Astrocyte of the cerebellum (primary cell): ENCODE measurements at regions of chr7 and their contacts with region 1.

Region 1: GRCh38 chr7:69610374-69611084 is 12.3 kb downstream of the AUTS2 start:
- DNase-seq: no peak
- H3K4me3 ChIP-seq: no peak overlapping the region
- CTCF ChIP-seq: no peak

Region 2: DNA sequence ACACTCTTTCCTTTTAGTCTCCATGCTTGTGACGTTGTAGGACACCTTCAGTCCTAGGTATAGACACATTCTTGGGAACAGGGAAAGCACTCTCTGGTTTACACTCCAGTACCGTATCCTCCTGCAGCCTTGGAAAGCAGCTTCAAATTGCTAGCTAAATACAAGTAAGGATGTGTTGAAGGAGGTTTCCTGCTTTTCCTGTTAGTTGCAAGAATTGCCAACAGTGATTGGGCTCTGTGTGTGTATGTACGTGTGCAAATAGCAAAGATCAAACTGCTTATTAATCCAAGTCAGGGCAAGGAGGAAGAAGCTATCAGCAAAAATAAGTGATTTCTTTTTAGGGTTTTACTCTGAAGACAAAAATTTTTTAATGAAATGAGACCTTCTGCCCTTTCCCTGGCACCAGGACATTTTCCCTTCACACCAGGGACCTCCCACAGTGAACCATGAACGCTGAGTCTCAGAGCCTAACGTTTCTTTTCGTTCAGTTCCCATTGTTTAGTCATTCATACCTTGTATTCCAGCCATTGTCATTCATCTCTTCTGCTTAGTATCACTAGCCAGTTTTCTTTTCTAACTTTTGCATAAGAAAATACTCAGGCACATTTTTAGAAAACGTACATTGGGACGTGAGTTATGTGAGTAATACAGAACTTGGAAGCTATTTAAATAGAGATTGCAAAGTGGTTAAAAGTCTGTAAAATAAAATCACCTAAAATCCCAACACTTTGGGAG is 49.1 kb before region 1 on chr7:
- in situ Hi-C with region 1: no loop called
- DNase-seq: no peak
- H3K4me3 ChIP-seq: no peak overlapping the region
- CTCF ChIP-seq: no peak

Region 3: GRCh38 chr7:70710011-70710480 is 1099.5 kb after region 1 on chr7:
- in situ Hi-C with region 1: loop called (anchors 10 kb)
- DNase-seq: peak; percentile 58
- H3K4me3 ChIP-seq: no peak overlapping the region
- CTCF ChIP-seq: no peak